Panc1 (cell line): ENCODE measurements at regions of chr15 and their contacts with region 1.

Region 1: DNA sequence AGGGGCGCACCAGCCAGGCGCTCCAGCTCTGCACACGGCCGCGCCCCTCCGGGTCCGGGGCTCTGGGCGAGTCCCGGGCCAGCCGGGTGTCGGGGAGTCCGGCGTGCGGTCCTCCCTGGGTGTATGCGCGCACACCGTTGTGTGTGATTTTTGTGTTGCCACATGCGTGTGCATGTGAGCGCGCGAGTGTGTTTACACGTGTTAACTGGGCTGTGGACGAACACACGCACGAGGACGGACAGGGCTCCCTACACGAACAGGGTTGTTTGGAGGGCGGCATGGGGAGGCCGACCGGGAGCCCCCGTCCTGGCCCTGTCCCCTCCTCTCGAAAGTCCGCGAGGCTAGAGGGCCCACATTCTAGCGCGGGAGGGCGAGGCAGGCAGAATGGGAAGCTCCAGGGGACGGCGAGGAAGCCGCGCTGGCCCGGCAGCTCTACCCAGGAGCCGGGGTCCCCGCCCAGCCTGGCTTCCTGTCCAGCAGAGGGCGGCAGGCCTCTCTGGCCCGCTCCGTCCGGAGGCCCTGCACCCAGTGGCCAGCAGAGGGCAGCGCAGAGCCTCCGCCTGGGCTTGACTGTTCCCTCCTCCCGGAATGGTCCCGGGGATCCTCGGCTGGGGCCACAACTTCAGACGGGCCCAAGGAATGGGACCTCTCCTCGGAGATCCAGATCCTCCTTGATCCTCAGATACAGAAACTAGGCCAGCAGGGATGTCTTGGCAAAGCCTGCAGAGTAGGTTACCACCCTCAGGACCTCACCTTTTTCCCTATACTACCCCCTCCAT is 611 bp upstream of the LINGO1 start:
- DNase-seq: peak; percentile 57
- ATAC-seq: peak; percentile 91
- H3K4me3 ChIP-seq: peak overlapping the region; percentile 39 to 51
- H3K27ac ChIP-seq: no peak overlapping the region
- H3K4me1 ChIP-seq: peaks cover 24% of the 10 kb centered on the region
- H3K27me3 ChIP-seq: no peaks in the 10 kb centered on the region; the same call in 1 of the 2 replicates
- CTCF ChIP-seq: peak; percentile 100

Region 2: GRCh38 chr15:77430213-77430612 is 203.1 kb before region 1 on chr15:
- CTCF ChIA-PET with region 1: no interaction called
- POLR2A ChIA-PET with region 1: no interaction called
- in situ Hi-C with region 1: no loop called
- intact Hi-C with region 1: no loop called
- DNase-seq: no peak
- ATAC-seq: no peak
- H3K4me3 ChIP-seq: no peak overlapping the region
- H3K27ac ChIP-seq: no peak overlapping the region
- H3K4me1 ChIP-seq: peaks cover 7% of the 10 kb centered on the region
- H3K27me3 ChIP-seq: no peaks in the 10 kb centered on the region
- CTCF ChIP-seq: no peak

Region 3: DNA sequence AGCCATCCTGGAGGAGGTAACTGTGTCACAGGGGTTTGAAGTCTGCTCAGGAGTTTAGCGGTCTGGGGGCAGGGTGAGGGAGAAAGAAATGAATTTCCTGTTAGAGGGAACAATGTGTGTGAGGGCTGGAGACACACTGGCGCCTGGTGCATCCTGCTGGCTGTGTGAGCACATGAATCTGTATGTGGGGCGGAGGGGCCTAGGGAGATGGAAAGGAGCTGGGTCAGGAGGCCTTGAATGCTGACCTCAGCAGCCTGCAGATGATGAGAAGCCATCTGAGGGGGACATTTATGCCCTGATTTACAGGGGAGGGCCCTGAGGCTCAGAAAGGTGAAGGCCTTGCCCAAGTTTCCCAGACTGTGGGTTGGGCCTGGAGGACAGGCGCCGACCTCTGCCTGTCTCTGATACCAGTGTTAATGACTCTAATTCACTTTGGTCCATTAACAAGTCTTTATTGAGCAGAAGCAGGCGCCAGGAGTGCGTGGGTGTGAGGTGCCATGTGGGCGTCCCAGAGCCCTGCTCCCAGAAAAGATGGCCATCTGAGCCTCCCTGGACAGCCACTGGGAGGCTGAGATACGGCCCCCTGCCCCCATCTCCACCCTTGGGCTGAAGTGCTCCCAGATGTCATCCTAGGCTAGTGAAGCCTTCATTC is 35.4 kb before region 1 on chr15:
- CTCF ChIA-PET with region 1: no interaction called
- POLR2A ChIA-PET with region 1: no interaction called
- in situ Hi-C with region 1: no loop called
- intact Hi-C with region 1: no loop called
- DNase-seq: no peak
- ATAC-seq: no peak; the same call in 1 of the 2 replicates
- H3K4me3 ChIP-seq: no peak overlapping the region
- H3K27ac ChIP-seq: no peak overlapping the region
- H3K4me1 ChIP-seq: no peaks in the 10 kb centered on the region
- H3K27me3 ChIP-seq: no peaks in the 10 kb centered on the region
- CTCF ChIP-seq: no peak

Region 4: DNA sequence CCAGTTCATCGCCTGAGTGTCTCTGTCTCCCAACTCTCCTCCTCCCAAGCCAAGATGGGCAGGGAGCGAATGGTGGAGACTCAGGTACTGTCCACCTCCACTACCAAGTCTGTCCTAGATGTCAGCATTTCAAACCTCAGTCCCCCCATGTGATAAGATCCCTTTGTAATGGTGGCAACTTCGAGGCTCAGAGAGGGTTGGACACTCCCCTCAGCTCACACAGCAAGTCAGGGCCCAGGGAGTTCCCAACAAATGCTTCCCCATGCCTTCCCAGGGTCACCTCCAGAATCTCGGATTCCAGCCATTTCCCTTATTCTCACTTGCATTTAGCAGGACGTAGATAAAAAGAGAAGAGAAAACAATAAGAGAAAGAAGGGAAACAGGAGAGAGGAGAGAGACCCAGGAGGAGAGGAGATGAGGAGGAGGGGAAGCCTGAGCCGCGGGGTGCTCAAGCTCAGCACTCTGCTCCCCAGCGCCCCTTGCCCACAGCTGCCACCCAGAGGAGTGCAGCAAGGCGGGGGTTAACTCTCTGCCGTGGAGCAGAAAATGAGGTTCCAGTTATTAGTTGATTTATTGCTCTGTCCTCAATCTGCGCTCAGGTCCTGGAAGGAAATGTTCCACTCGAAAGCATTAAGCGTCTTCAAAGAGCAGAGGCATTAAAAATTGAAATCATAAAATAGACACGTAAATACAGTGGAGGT is 83.5 kb after region 1 on chr15:
- CTCF ChIA-PET with region 1: interaction called, 13 read pairs
- POLR2A ChIA-PET with region 1: no interaction called
- in situ Hi-C with region 1: no loop called
- intact Hi-C with region 1: no loop called
- DNase-seq: no peak
- ATAC-seq: no peak
- H3K4me3 ChIP-seq: no peak overlapping the region
- H3K27ac ChIP-seq: no peak overlapping the region
- H3K4me1 ChIP-seq: no peaks in the 10 kb centered on the region
- H3K27me3 ChIP-seq: no peaks in the 10 kb centered on the region
- CTCF ChIP-seq: no peak

Region 5: GRCh38 chr15:77821188-77821958 is 188.1 kb after region 1 on chr15:
- CTCF ChIA-PET with region 1: interaction called, 36 read pairs
- POLR2A ChIA-PET with region 1: no interaction called
- in situ Hi-C with region 1: no loop called
- intact Hi-C with region 1: loop called (anchors 1 kb)
- DNase-seq: peak; percentile 43
- ATAC-seq: peak; percentile 84
- H3K4me3 ChIP-seq: no peak overlapping the region
- H3K27ac ChIP-seq: no peak overlapping the region
- H3K4me1 ChIP-seq: no peaks in the 10 kb centered on the region
- H3K27me3 ChIP-seq: peaks cover 10% of the 10 kb centered on the region; the same call in 1 of the 2 replicates
- CTCF ChIP-seq: peak; percentile 96